Ovary (tissue), 10 donors: ENCODE measurements at regions of chr14 and their contacts with region 1.

Region 1: DNA sequence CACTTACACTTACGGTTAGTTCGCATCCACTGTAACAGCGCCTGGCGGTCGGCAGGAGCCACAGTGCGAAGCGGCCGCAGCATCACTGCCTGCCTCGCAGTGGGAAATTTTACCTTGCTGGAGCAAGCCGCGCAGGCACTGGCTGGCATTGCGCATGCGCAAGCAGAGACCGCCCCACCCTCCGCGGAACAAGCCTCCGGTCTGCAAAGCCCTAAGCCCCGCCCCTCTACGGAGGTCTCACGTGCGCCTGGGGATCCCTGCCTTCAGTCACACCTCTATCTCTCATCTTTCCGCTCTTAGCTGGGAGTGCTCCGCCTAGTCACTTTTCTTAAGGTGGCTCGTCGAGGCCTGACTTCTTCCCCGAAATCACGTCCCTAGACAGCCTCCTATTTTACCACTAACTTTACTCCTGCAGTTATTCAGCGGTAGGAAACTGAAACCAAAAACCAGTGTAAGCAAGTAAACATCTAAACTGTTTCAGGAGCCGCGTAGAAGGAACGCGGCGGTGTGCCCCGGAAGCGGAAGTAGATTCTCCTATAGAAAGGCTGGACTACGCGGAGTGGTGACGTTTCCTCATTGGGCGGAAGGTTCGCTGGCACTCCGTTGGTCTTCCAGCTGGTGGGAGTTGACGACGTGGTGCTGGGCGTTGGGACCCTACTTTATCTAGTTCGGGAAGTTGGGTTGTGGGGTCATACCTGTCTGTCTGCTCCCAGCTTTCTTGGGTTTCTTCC is at the start of gene SRP54:
- DNase-seq: peak; percentile 98 to 99 (median 99)
- H3K4me3 ChIP-seq: peak within 1 kb of the TSS; percentile 63
- H3K27ac ChIP-seq: peak within 1 kb of the TSS; percentile 67 to 96
- H3K4me1 ChIP-seq: peaks cover 14% of the 10 kb centered on the region
- H3K27me3 ChIP-seq: no peaks in the 10 kb centered on the region
- CTCF ChIP-seq: peak in 1 of 3 donors; percentile 50
- EP300 ChIP-seq: peak; percentile 24
- POLR2A ChIP-seq: peak; percentile 76
- total RNA-seq, gene SRP54: 29.0 to 41.2 (median 37.3) TPM

Region 2: GRCh38 chr14:35046048-35046741 is 63.6 kb after region 1 on chr14 and contains the start of gene FAM177A1:
- intact Hi-C with region 1: loop called in 1 of 4 experiments (anchors 5 kb)
- DNase-seq: peak; percentile 97 to 98 (median 97)
- H3K4me3 ChIP-seq: peak within 1 kb of the TSS; percentile 77
- H3K27ac ChIP-seq: peak within 1 kb of the TSS; percentile 48 to 92
- H3K4me1 ChIP-seq: no peaks in the 10 kb centered on the region
- H3K27me3 ChIP-seq: no peaks in the 10 kb centered on the region
- CTCF ChIP-seq: no peak
- EP300 ChIP-seq: peak; percentile 68
- POLR2A ChIP-seq: peak; percentile 82
- total RNA-seq, gene FAM177A1: 15.7 to 45.9 (median 35.5) TPM